ENCODE measurements at regions of chr14 and their contacts with region 1.

Region 1: GRCh38 chr14:96666088-96666487 is 131.1 kb upstream of the VRK1 start:
- DNase-seq: no peak
- ATAC-seq: peak; percentile 51; the same call in 2 of the 3 replicates
- H3K4me3 ChIP-seq: no peak overlapping the region
- H3K27ac ChIP-seq: no peak overlapping the region
- H3K4me1 ChIP-seq: no peaks in the 10 kb centered on the region
- H3K27me3 ChIP-seq: no peaks in the 10 kb centered on the region; a peak in 1 of 4 replicates
- CTCF ChIP-seq: peak in 1 of 3 experiments; percentile 17; a peak in 1 of 6 replicates
- EP300 ChIP-seq: no peak
- POLR2A ChIP-seq: no peak
- RAD21 ChIP-seq: no peak

Region 2: GRCh38 chr14:96584199-96584906 is 81.7 kb before region 1 on chr14:
- CTCF ChIA-PET with region 1: interaction called, 5 read pairs
- POLR2A ChIA-PET with region 1: no interaction called
- RAD21 ChIA-PET with region 1: no interaction called
- SMC1A ChIA-PET with region 1: interaction called, 3 read pairs
- in situ Hi-C with region 1: no loop called
- intact Hi-C with region 1: loop called (anchors 1 kb)
- DNase-seq: no peak
- ATAC-seq: peak; percentile 92
- H3K4me3 ChIP-seq: no peak overlapping the region
- H3K27ac ChIP-seq: no peak overlapping the region
- H3K4me1 ChIP-seq: no peaks in the 10 kb centered on the region
- H3K27me3 ChIP-seq: peaks cover 0 to 2% of the 10 kb centered on the region in 2 experiments; a peak in 1 of 4 replicates
- CTCF ChIP-seq: peak; percentile 65 to 90 (median 74)
- EP300 ChIP-seq: no peak
- POLR2A ChIP-seq: no peak
- RAD21 ChIP-seq: peak; percentile 67